Calu3 (cell line): ENCODE measurements at regions of chr1 and their contacts with region 1.

Region 1: DNA sequence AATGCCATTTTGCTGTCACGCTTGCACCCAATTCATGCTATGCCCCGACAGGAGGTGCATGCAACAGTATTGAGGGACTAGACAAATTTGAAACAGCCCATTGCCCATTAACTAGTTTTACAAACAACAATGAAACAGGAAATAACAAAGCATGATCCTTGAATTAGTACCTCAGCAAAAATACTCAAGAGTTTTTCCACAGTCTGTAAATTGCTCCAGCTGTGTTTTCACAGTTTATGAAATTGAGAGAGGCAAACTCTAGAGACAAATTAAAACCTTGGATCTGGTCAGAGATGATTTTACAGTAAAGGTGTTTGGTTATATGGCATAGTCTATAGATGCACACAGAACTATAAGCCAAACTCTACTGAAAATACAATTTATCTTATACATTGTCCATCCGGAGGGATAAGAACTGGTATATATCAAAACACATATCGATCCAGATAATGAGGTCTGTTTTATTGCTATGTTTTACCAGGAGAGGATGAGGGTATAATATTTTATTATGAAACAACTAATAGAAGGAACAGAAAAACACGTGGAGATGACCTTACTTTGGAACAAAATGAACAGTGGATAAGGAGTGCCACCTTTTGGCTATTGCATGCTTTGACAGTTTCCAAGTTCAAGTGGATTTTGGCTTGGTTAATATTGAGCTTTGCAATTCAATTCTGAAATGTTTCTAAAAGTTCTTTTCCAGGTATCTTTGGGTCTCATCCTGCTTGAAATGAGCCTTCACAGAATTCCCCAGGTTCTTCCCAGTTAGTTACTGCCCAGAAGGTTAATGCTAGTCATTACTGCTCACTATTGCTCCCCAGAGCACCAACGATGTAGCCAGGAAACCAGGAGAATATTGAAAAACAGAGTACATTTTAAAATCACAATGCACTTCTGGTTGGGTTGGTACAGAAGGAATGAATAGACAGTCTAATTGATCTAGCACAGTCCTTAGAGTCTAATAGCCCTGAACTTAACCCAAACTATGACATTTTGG is 45.7 kb downstream of the ZC3H11B start:
- DNase-seq: peak; percentile 36
- H3K4me3 Mint-ChIP-seq: no peak overlapping the region
- H3K27ac Mint-ChIP-seq: no peak overlapping the region
- H3K4me1 Mint-ChIP-seq: peaks cover 23% of the 10 kb centered on the region
- H3K27me3 Mint-ChIP-seq: no peaks in the 10 kb centered on the region
- CTCF ChIP-seq: peak; percentile 45

Region 2: DNA sequence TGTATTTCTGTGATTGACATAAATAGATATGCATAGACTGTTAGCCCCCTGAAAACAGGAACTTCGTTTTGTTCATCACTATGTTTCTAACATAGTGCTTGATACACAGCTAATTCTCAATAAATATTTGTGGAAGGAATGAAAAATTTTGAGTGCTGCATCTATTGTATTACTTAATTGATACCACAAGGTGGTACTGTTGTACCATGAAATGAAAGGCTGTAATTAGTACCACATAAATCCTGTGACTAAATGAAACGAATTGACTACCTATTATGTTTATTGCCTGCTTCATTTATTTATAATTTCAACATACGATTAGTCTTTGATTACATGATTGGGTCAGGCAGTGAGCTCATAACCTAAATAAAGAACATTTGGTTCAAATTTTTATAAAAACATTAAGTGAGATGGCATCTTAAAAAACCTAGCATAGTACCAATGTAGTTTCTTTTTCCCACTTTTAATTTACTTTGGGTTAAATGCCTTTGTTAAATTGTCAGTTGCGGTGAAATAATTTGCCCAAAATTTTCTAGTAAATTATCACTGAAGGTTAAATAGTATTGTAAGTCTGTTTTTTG is 1237.1 kb before region 1 on chr1:
- CTCF ChIA-PET with region 1: interaction called, 3 read pairs
- intact Hi-C with region 1: loop called (anchors 2 kb)
- DNase-seq: no peak
- H3K4me3 Mint-ChIP-seq: no peak overlapping the region
- H3K27ac Mint-ChIP-seq: peak overlapping the region; percentile 36
- H3K4me1 Mint-ChIP-seq: no peaks in the 10 kb centered on the region
- H3K27me3 Mint-ChIP-seq: no peaks in the 10 kb centered on the region
- CTCF ChIP-seq: peak; percentile 52

Region 3: GRCh38 chr1:218339267-218339831 is 1227.9 kb before region 1 on chr1:
- CTCF ChIA-PET with region 1: no interaction called
- intact Hi-C with region 1: loop called (anchors 2 kb)
- DNase-seq: no peak
- H3K4me3 Mint-ChIP-seq: no peak overlapping the region
- H3K27ac Mint-ChIP-seq: no peak overlapping the region
- H3K4me1 Mint-ChIP-seq: peaks cover 20% of the 10 kb centered on the region
- H3K27me3 Mint-ChIP-seq: no peaks in the 10 kb centered on the region
- CTCF ChIP-seq: peak; percentile 63

Region 4: GRCh38 chr1:219201656-219202055 is 365.6 kb before region 1 on chr1:
- CTCF ChIA-PET with region 1: no interaction called
- intact Hi-C with region 1: loop called (anchors 2 kb)
- DNase-seq: no peak
- H3K4me3 Mint-ChIP-seq: no peak overlapping the region
- H3K27ac Mint-ChIP-seq: no peak overlapping the region
- H3K4me1 Mint-ChIP-seq: no peaks in the 10 kb centered on the region
- H3K27me3 Mint-ChIP-seq: no peaks in the 10 kb centered on the region
- CTCF ChIP-seq: no peak

Region 5: DNA sequence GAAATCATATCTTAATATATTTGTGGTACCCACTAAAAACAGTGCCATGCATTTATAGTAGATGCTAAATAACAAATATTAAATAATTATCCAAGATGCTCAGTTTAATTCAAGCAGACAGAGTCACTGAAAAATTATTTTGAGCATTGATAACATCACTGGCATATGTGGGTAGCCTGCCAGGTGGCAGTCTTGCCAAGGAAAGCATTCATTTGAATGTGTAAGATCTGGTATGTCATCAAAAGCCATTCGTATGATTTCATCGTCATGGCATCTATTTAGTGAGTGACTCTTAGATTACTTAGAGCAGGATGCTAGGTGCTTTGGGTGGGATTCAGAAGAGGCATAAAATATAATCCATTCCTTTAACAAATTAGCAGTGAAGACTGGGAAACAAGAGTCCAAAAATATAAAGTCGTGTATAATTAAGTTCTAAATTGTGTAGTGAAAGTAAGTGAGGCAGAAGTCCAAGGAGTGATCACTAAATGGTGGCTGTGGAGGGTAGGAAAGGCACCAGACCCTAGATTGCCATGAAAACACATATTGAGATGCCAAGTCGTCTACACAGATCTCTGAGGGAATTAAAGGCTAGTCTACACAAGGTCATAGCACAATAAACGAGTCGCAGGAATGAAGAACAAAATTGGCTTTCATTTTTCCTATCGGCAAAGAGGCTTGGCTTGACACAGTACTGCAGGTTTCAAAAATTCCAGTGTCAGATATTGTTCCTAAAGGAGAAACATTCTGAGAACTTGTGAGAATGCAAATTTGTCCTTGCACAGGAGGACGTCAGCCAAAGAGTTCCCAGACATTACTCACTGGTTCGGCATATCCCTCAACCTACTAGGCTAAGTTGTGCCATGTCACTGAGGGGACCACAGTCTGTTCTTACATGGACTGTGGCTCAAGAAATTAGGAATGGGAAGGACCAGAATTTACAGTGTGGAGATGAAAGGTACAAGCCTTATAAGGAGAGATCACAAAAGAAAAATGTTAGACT is 262.7 kb before region 1 on chr1:
- CTCF ChIA-PET with region 1: no interaction called
- intact Hi-C with region 1: loop called (anchors 2 kb)
- DNase-seq: peak; percentile 27
- H3K4me3 Mint-ChIP-seq: no peak overlapping the region
- H3K27ac Mint-ChIP-seq: no peak overlapping the region
- H3K4me1 Mint-ChIP-seq: peaks cover 10% of the 10 kb centered on the region
- H3K27me3 Mint-ChIP-seq: no peaks in the 10 kb centered on the region
- CTCF ChIP-seq: no peak

Region 6: DNA sequence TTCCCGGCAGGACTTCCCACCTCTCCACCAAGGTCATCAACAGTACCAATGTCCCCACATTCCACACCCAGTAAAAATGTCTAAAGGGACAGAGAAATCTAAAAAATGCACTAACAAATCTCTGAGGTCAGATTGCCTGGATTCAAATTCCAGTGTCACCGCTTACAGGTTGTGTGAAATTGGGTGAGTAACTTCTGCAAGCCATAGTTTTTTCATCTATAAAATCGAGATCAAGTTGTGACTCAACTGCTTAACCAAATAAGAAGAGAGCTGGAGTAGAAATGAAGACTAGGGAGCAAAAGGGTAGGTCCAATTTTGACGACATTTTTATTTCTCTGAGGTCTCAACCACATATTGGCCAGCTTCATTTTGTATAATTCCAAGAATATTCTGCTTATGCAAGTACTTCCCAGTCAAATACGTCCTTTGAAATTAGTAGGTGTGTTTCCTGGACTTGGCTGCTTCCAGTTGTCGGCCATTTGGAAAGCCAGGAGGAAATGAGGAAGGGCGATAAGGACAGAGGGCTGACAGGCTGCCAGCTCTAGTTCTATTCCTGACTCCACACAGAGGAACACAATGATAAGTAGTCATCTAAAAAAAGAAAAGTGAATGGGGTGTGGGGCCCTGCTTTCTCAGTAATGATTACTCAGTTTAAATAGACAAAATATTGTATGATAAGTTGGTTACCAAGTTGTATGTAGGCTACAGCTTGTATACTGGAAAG is 103.3 kb after region 1 on chr1:
- CTCF ChIA-PET with region 1: no interaction called
- intact Hi-C with region 1: no loop called
- DNase-seq: no peak
- H3K4me3 Mint-ChIP-seq: no peak overlapping the region
- H3K27ac Mint-ChIP-seq: no peak overlapping the region
- H3K4me1 Mint-ChIP-seq: no peaks in the 10 kb centered on the region
- H3K27me3 Mint-ChIP-seq: peaks cover 64% of the 10 kb centered on the region
- CTCF ChIP-seq: no peak